Naive thymus-derived CD4-positive, alpha-beta T cell (primary cell): ENCODE measurements at regions of chr20 and their contacts with region 1.

Region 1: DNA sequence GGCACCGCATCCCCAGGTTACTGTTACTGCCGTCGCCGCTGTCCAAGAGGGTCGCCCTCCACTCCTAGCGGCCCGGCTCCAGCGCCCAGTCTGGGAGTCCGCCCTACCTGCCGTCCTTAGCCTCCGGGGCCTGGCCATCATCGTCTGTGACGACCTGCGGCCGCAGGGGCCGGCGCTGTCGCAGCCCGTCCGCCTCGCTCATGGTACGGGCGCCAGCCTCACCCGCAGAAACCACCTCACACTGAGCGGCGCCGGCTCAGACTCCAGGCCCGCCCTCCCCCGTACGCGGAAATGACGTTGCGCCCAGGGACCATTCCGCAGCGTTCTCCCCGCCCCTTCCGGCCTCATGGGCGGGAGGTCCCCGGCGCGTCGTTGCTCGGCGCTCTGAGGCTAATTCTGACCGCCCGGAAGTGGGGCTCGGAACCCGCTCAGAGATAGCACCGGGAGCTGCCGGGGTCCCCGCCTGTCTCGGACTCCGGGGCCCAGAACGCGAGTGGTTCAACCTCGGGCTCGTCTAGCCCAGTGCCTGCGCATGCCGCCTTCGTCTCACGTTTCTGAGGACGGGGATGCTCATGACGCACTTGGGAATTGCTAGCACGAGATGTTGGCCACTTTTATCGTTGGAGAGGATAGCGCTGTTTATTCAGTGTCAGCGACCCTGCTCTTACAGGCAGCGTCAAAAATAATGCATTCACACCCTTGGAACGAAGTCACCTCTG is at the start of gene APMAP:
- DNase-seq: peak; percentile 88 to 97 (median 94)
- ATAC-seq: peak; percentile 96
- H3K4me3 ChIP-seq: peak within 1 kb of the TSS; percentile 90
- H3K4me3 Mint-ChIP-seq: peak within 1 kb of the TSS; percentile 88 to 96 (median 94)
- H3K27ac ChIP-seq: peak within 1 kb of the TSS; percentile 97
- H3K27ac Mint-ChIP-seq: peak within 1 kb of the TSS; percentile 93 to 98 (median 97)
- H3K4me1 ChIP-seq: peaks cover 27 to 36% of the 10 kb centered on the region in 2 donors
- H3K4me1 Mint-ChIP-seq: peaks cover 39 to 71% (median 57%) of the 10 kb centered on the region in 7 donors
- H3K27me3 ChIP-seq: no peaks in the 10 kb centered on the region
- H3K27me3 Mint-ChIP-seq: peaks cover 0 to 16% (median 0%) of the 10 kb centered on the region in 5 donors
- total RNA-seq, gene APMAP: 28.2 to 47.3 (median 38.8) TPM

Region 2: GRCh38 chr20:23420943-23421931 is 1571.4 kb before region 1 on chr20 and contains the start of gene NAPB:
- CTCF ChIA-PET with region 1: no interaction called
- POLR2A ChIA-PET with region 1: no interaction called
- intact Hi-C with region 1: loop called in 1 of 2 experiments (anchors 5 kb)
- DNase-seq: peak; percentile 82 to 93 (median 91)
- ATAC-seq: peak; percentile 99
- H3K4me3 ChIP-seq: peak within 1 kb of the TSS; percentile 84
- H3K4me3 Mint-ChIP-seq: peak within 1 kb of the TSS; percentile 86 to 96 (median 92)
- H3K27ac ChIP-seq: peak within 1 kb of the TSS; percentile 87
- H3K27ac Mint-ChIP-seq: peak within 1 kb of the TSS; percentile 55 to 95 (median 89)
- H3K4me1 ChIP-seq: peaks cover 7 to 22% of the 10 kb centered on the region in 2 donors
- H3K4me1 Mint-ChIP-seq: peaks cover 21 to 55% (median 39%) of the 10 kb centered on the region in 7 donors
- H3K27me3 ChIP-seq: no peaks in the 10 kb centered on the region
- H3K27me3 Mint-ChIP-seq: peaks cover 0 to 11% (median 6%) of the 10 kb centered on the region in 5 donors
- total RNA-seq, gene NAPB: 11.4 to 20.4 (median 16.2) TPM

Region 3: DNA sequence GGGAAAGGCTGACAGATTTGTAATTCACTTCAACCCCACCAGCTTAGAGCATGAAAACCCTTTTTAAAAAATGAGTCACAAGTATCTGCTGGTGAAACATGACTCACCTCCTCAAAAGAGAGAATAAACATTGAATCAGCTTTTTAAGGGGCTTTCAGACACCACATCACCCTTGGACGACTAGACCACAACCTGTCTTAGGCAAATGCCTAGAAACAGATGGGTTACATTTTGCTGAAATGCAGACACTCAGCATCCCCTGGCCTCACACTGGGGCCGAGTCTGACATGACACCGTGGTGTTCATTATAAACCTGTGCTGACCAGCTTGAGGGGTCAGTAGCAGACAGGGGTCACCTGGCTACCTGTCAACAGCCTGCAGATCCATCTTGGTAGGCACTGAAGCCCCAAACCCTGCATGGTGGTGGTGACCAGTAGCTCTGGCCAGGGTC is 218.9 kb before region 1 on chr20:
- CTCF ChIA-PET with region 1: no interaction called
- POLR2A ChIA-PET with region 1: no interaction called
- intact Hi-C with region 1: no loop called
- DNase-seq: no peak
- ATAC-seq: no peak
- H3K4me3 ChIP-seq: no peak overlapping the region
- H3K4me3 Mint-ChIP-seq: no peak overlapping the region
- H3K27ac ChIP-seq: no peak overlapping the region
- H3K27ac Mint-ChIP-seq: no peak overlapping the region
- H3K4me1 ChIP-seq: no peaks in the 10 kb centered on the region
- H3K4me1 Mint-ChIP-seq: peaks cover 0 to 6% (median 0%) of the 10 kb centered on the region in 7 donors
- H3K27me3 ChIP-seq: no peaks in the 10 kb centered on the region
- H3K27me3 Mint-ChIP-seq: peaks cover 23 to 43% (median 35%) of the 10 kb centered on the region in 5 donors

Region 4: DNA sequence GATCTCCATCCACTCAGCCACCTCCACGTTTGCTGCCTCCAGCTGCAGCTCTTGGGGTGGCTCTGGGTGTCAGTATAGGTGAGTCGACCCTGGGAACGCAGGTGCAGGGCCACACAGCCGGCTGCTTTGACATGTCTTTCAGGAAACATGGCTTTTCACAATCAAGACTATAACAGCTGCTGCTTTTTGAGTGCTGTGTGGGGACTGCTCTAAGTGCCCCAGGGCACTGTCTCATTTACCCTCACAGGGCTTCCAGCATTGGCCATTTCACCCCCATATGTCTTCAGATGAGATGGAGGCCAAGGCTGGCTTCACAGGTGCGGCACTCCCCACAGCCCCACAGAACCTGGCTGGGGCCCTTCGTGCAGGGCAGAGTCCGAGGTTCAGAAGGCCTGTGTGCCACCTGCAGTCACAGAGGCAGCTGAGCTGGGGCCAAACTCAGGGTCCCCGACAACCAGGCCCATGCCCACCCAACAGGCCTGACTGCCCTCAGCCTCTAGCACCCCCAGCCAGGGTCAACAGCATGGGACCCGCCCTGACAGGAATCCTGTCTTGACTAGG is 58.5 kb before region 1 on chr20:
- CTCF ChIA-PET with region 1: no interaction called
- POLR2A ChIA-PET with region 1: no interaction called
- intact Hi-C with region 1: loop called (anchors 2 to 5 kb)
- DNase-seq: no peak
- ATAC-seq: no peak
- H3K4me3 ChIP-seq: no peak overlapping the region
- H3K4me3 Mint-ChIP-seq: no peak overlapping the region
- H3K27ac ChIP-seq: no peak overlapping the region
- H3K27ac Mint-ChIP-seq: no peak overlapping the region
- H3K4me1 ChIP-seq: peaks cover 16 to 30% of the 10 kb centered on the region in 2 donors
- H3K4me1 Mint-ChIP-seq: peaks cover 19 to 50% (median 25%) of the 10 kb centered on the region in 7 donors
- H3K27me3 ChIP-seq: no peaks in the 10 kb centered on the region
- H3K27me3 Mint-ChIP-seq: no peaks in the 10 kb centered on the region

Region 5: DNA sequence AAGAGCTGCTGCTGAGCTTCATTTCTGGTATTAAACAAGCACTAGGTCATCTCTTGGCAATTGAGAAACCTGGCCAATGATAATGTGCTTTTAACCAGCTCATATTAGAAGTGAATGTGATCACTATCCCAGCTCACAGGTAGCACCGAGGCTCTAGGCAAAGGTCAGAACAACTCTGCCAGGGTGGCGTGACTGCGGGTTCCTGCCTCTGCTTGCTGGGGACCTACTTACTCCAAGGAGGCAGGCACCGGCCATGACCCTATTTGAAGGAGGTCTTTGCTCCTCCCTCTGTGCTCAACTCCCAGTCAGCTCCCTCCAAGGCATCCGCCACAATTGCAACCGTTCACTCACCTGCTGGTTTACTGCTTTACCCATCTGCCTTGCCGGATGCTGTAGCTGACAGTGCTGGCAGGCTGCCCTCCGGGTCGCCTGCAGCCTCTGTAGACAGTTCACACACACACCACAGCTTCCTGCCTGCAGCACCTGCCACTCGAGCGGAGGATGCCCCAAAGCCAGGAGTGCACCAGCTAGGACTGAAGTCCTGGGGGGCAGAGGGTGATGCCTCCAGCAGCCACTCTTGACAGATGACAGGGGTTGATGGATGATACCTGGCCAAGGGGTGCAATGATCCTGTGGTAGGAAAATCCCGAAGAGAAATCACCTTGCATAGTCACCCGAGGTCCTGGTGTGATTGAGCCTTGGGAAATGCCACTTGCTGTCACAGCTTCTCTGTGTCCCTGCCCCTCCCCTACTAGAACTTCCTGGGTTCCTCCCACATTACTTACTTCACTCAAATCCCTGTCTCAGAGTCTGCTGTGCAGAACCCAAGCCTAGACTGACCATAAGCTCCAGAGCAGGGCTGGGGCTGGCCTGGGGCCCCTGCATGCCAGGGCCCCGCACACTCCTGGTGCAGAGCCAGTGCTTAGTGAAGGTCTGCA is 98.1 kb after region 1 on chr20:
- CTCF ChIA-PET with region 1: interaction called, 10 read pairs
- POLR2A ChIA-PET with region 1: interaction called, 16 read pairs
- intact Hi-C with region 1: loop called in 1 of 2 experiments (anchors 1 kb)
- DNase-seq: peak in 8 of 9 donors; percentile 55 to 87 (median 82)
- ATAC-seq: peak; percentile 98
- H3K4me3 ChIP-seq: peak overlapping the region; percentile 36
- H3K4me3 Mint-ChIP-seq: peak overlapping the region; percentile 40 to 79 (median 66)
- H3K27ac ChIP-seq: peak overlapping the region; percentile 41
- H3K27ac Mint-ChIP-seq: peak overlapping the region; percentile 37 to 90 (median 75)
- H3K4me1 ChIP-seq: peaks cover 21 to 27% of the 10 kb centered on the region in 2 donors
- H3K4me1 Mint-ChIP-seq: peaks cover 12 to 56% (median 42%) of the 10 kb centered on the region in 7 donors
- H3K27me3 ChIP-seq: no peaks in the 10 kb centered on the region
- H3K27me3 Mint-ChIP-seq: peaks cover 6 to 19% (median 7%) of the 10 kb centered on the region in 5 donors

Region 6: DNA sequence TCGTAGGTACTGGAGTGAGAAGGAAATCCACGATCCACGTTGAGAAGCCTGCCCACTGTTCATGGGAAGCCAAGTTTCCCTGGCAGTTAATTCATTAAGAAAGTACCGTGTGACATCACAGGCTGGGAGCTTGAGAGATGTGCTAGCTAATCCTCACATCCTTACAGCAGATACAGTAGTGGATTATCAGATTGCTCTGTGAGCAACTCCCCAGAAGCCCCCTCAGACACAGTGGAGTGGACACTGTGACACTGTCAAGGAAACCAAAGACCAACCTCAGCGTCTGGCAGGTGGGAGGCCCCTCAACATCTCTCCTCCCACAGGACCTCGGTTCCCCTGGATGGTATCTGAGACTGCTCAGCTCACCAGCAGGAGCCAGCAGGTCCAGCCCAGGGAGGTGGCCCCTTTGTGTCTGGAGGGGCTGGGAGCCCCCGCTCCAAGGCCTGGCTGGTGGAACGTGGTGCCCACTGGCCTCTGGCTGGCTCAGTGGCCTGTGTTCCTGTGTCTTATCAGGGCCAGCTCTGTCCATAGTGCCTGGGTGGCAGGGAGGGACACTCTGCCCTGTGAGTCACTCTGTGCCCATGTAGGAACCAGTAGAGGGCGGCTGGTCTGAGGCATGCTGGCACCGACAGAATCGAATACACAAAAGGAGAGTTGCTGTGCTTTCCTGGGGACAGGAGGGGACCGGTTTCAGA is 262.5 kb after region 1 on chr20:
- CTCF ChIA-PET with region 1: no interaction called
- POLR2A ChIA-PET with region 1: interaction called, 3 read pairs
- intact Hi-C with region 1: loop called in 1 of 2 experiments (anchors 1 kb)
- DNase-seq: peak in 1 of 9 donors; percentile 42
- ATAC-seq: no peak
- H3K4me3 ChIP-seq: no peak overlapping the region
- H3K4me3 Mint-ChIP-seq: peak overlapping the region in 1 of 10 donors; percentile 50
- H3K27ac ChIP-seq: no peak overlapping the region
- H3K27ac Mint-ChIP-seq: peak overlapping the region in 5 of 9 donors; percentile 33 to 92 (median 54)
- H3K4me1 ChIP-seq: peaks cover 0 to 18% of the 10 kb centered on the region in 2 donors
- H3K4me1 Mint-ChIP-seq: peaks cover 32 to 80% (median 74%) of the 10 kb centered on the region in 7 donors
- H3K27me3 ChIP-seq: no peaks in the 10 kb centered on the region
- H3K27me3 Mint-ChIP-seq: no peaks in the 10 kb centered on the region

Region 7: GRCh38 chr20:25399037-25399430 is 406.4 kb after region 1 on chr20:
- CTCF ChIA-PET with region 1: interaction called, 6 read pairs
- POLR2A ChIA-PET with region 1: no interaction called
- intact Hi-C with region 1: loop called (anchors 1 kb)
- DNase-seq: peak in 7 of 9 donors; percentile 14 to 48 (median 28)
- ATAC-seq: peak; percentile 59
- H3K4me3 ChIP-seq: no peak overlapping the region
- H3K4me3 Mint-ChIP-seq: no peak overlapping the region
- H3K27ac ChIP-seq: no peak overlapping the region
- H3K27ac Mint-ChIP-seq: no peak overlapping the region
- H3K4me1 ChIP-seq: no peaks in the 10 kb centered on the region
- H3K4me1 Mint-ChIP-seq: peaks cover 0 to 6% (median 0%) of the 10 kb centered on the region in 7 donors
- H3K27me3 ChIP-seq: no peaks in the 10 kb centered on the region
- H3K27me3 Mint-ChIP-seq: peaks cover 0 to 19% (median 0%) of the 10 kb centered on the region in 5 donors

Region 8: GRCh38 chr20:26208296-26209091 is 1215.8 kb after region 1 on chr20:
- CTCF ChIA-PET with region 1: no interaction called
- POLR2A ChIA-PET with region 1: no interaction called
- intact Hi-C with region 1: loop called in 1 of 2 experiments (anchors 5 kb)
- DNase-seq: peak; percentile 26 to 77 (median 63)
- ATAC-seq: peak; percentile 95
- H3K4me3 ChIP-seq: peak overlapping the region; percentile 60
- H3K4me3 Mint-ChIP-seq: peak overlapping the region in 8 of 10 donors; percentile 32 to 83 (median 68)
- H3K27ac ChIP-seq: peak overlapping the region; percentile 70
- H3K27ac Mint-ChIP-seq: peak overlapping the region in 3 of 9 donors; percentile 17 to 61 (median 59)
- H3K4me1 ChIP-seq: no peaks in the 10 kb centered on the region
- H3K4me1 Mint-ChIP-seq: peaks cover 6 to 44% (median 37%) of the 10 kb centered on the region in 7 donors
- H3K27me3 ChIP-seq: no peaks in the 10 kb centered on the region
- H3K27me3 Mint-ChIP-seq: peaks cover 0 to 21% (median 10%) of the 10 kb centered on the region in 5 donors